ENCODE measurements at regions of chr6 and their contacts with region 1.

Region 1: GRCh38 chr6:32912951-32913350 is 27.9 kb downstream of the HLA-DMB start:
- DNase-seq: no peak
- H3K4me3 Mint-ChIP-seq: no peak overlapping the region
- H3K27ac Mint-ChIP-seq: no peak overlapping the region
- H3K4me1 Mint-ChIP-seq: no peaks in the 10 kb centered on the region
- H3K27me3 Mint-ChIP-seq: peaks cover 44% of the 10 kb centered on the region

Region 2: GRCh38 chr6:32774426-32774825 is 138.5 kb before region 1 on chr6:
- CTCF ChIA-PET with region 1: no interaction called
- POLR2A ChIA-PET with region 1: no interaction called
- DNase-seq: no peak
- H3K4me3 Mint-ChIP-seq: no peak overlapping the region
- H3K27ac Mint-ChIP-seq: no peak overlapping the region
- H3K4me1 Mint-ChIP-seq: peaks cover 2% of the 10 kb centered on the region
- H3K27me3 Mint-ChIP-seq: peaks cover 48% of the 10 kb centered on the region

Region 3: DNA sequence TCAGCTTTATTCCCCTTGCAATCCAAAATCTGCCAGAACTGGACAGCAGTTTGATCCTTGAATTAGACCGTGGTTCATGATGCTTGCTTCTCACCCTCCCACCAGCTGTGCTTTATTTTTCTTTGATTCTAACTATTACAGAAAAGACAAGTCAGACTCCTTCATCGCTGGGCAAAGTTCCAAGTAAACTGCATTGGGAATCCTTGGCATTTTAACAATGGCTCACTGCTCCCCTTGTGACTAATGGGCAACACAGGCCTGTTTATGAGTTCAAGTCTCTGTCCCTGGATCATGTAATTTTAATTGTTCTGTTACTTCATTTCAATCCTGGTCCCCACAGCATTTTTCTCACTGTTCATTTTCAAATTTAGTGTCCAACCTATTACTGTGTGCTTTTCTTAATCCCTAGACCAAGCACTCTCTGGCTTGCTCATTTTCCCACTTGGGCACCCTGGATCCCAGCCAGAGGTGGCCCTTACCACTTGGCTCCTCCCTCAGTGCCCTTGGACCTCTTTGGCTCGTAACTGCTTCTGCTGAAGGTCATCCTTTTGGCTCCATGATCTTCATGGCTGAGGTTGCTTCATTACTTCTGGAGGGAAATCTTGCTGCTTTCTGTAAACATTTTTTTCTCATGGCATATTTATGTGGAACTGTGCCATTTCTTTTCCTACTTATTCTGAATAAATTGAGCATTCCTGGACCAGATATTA is 26.1 kb before region 1 on chr6:
- CTCF ChIA-PET with region 1: no interaction called
- POLR2A ChIA-PET with region 1: no interaction called
- DNase-seq: no peak
- H3K4me3 Mint-ChIP-seq: no peak overlapping the region
- H3K27ac Mint-ChIP-seq: no peak overlapping the region
- H3K4me1 Mint-ChIP-seq: peaks cover 4% of the 10 kb centered on the region
- H3K27me3 Mint-ChIP-seq: peaks cover 19% of the 10 kb centered on the region

Region 4: DNA sequence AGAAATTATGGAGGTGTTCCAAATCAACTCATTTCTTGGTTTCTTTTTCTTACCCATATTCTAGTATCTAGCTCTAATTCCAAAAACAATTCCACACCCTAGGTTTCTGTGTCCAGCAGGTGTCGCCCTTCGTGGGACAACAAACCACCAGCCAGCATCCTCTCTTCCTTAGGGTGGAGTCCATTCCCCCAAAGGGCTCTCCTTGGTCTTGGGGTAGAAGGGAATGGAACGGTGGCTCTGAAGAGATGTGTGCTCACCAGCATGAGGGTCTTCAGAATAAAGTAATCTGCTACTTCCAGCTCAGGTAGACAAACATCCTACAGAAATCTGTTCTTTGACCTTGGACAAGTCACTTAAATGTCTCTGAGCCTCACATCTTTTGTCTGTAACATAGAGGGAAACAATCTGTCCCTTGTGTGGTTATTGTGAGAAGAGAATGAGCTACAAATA is 20.7 kb after region 1 on chr6:
- CTCF ChIA-PET with region 1: interaction called, 12 read pairs
- POLR2A ChIA-PET with region 1: no interaction called
- DNase-seq: peak; percentile 81
- H3K4me3 Mint-ChIP-seq: no peak overlapping the region
- H3K27ac Mint-ChIP-seq: no peak overlapping the region
- H3K4me1 Mint-ChIP-seq: peaks cover 15% of the 10 kb centered on the region
- H3K27me3 Mint-ChIP-seq: peaks cover 18% of the 10 kb centered on the region